ENCODE measurements at regions of chr13 and their contacts with region 1.

Region 1: DNA sequence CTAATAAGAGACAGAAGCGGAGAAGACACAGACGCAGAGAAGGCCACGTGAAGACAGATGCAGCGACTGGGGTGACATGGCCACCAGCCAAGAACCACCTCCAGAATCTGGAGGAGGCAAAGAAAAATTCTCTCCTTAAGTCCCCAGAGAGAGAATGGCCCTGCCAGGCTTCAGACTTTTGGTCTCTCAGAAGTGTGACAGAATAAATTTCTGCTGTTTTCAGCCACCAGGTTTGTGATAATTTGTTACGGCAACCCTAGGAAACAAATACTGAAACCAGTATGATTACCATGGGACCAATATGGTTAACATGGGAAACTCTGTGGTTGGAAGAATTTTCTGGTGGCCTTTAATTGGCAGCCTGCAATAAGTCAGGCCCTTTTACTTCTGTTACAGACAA is 63.9 kb upstream of the DOCK9 start:
- DNase-seq: no peak
- H3K4me3 Mint-ChIP-seq: peak overlapping the region; percentile 18
- H3K27ac Mint-ChIP-seq: peak overlapping the region; percentile 59
- H3K4me1 Mint-ChIP-seq: peaks cover 62% of the 10 kb centered on the region
- H3K27me3 Mint-ChIP-seq: no peaks in the 10 kb centered on the region

Region 2: DNA sequence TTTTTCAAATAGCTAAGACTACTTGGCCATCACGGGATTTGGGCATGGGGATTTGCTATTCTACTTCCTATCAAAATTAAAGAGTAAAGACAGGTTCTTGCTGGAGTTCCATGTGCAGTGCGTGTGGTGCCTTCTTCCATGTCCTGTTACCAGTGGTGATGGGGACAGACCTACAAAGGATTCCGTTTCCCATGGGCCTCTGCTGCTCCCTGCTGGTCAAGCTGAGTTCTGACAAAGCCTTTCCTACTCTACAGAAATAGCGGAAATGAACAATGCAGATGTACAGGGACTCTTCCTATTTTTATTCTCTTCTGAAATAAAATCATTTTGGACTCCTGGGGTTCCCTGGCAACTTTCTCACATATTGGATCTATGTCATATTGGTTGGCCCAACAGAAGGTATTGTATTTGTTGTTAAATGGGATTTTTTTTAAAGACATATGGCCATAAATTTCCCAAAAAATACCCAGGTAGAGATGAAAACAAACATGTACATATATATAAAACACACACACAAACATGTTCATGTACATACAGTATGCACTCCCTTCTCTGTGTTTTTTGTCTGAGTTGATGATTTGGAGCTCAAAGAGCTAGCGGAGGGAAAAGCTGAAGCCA is 198.8 kb before region 1 on chr13:
- intact Hi-C with region 1: no loop called
- DNase-seq: peak; percentile 88
- H3K4me3 Mint-ChIP-seq: no peak overlapping the region
- H3K27ac Mint-ChIP-seq: no peak overlapping the region
- H3K4me1 Mint-ChIP-seq: peaks cover 7% of the 10 kb centered on the region
- H3K27me3 Mint-ChIP-seq: no peaks in the 10 kb centered on the region

Region 3: GRCh38 chr13:99062593-99062992 is 20.8 kb after region 1 on chr13:
- intact Hi-C with region 1: no loop called
- DNase-seq: no peak
- H3K4me3 Mint-ChIP-seq: no peak overlapping the region
- H3K27ac Mint-ChIP-seq: peak overlapping the region; percentile 50
- H3K4me1 Mint-ChIP-seq: peaks cover 65% of the 10 kb centered on the region
- H3K27me3 Mint-ChIP-seq: no peaks in the 10 kb centered on the region

Region 4: DNA sequence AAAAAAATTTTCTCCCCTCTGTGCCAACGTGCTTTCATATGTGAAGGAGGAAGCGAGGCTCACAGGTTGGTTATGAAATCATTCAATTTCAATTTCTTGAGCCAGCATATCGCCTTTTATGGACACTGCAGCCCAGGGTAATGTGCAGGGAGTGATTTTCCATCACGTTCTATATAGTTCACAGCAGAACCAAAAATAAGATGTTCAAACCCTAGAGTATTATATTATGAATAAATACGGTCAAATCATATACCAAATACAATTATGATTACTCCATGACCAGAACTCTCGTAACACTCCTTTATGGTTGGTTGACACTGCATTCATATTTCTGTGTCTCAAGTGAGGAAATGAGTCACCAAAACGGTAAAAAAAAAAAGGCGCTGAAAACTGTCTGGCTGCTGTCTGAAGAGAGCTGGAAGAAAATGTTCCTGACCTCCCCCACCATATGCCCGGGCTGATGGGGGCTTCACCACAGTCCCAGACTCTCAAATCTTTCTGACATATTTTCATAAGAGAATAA is 83.1 kb after region 1 on chr13:
- intact Hi-C with region 1: loop called (anchors 10 kb)
- DNase-seq: peak; percentile 68
- H3K4me3 Mint-ChIP-seq: peak overlapping the region; percentile 29
- H3K27ac Mint-ChIP-seq: peak overlapping the region; percentile 46
- H3K4me1 Mint-ChIP-seq: peaks cover 25% of the 10 kb centered on the region
- H3K27me3 Mint-ChIP-seq: peaks cover 4% of the 10 kb centered on the region